ENCODE measurements at regions of chr17 and their contacts with region 1.

Region 1: GRCh38 chr17:80866147-80866793 is 125.4 kb upstream of the CHMP6 start:
- DNase-seq: peak; percentile 87
- ATAC-seq: peak; percentile 59
- H3K4me3 Mint-ChIP-seq: no peak overlapping the region
- H3K27ac Mint-ChIP-seq: peak overlapping the region; percentile 88
- H3K4me1 Mint-ChIP-seq: peaks cover 89% of the 10 kb centered on the region
- H3K27me3 Mint-ChIP-seq: no peaks in the 10 kb centered on the region

Region 2: DNA sequence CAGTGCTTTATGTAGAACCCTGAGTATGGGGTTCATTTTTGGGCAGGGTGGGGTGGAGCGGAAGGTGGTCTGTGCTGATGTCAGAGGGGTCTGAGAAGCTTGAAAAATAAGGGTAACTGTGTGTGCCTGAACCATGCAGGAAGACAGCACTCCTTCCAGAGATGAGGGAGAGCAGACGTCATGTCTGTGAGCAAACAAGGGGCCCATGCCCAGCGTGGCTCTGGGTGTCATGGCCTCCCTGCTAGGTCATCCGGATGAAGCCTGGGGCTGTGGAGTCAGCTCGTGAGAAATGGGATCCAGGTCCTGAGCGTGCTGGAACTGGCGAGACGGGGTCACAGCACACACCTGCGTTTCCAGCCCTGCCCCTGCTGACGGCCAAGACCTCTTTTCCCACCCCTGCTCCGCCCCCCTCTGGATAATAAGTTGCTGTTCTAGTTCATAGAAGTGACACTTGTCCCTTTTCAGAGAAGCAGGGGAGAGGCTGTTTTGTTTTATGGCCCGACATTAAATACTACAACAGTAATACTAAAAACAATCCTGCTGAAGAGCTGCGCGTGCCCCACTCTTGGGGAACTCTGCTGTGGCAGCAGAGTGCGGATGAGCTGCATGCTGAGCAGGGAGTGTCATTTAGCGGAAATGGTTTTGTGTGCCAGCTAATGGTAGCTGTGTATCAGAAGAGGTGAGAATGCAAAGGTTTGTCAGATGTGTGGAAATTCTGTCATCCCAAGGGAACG is 229.1 kb before region 1 on chr17:
- CTCF ChIA-PET with region 1: no interaction called
- POLR2A ChIA-PET with region 1: no interaction called
- intact Hi-C with region 1: no loop called
- DNase-seq: no peak
- ATAC-seq: no peak
- H3K4me3 Mint-ChIP-seq: no peak overlapping the region
- H3K27ac Mint-ChIP-seq: no peak overlapping the region
- H3K4me1 Mint-ChIP-seq: peaks cover 6% of the 10 kb centered on the region
- H3K27me3 Mint-ChIP-seq: no peaks in the 10 kb centered on the region

Region 3: DNA sequence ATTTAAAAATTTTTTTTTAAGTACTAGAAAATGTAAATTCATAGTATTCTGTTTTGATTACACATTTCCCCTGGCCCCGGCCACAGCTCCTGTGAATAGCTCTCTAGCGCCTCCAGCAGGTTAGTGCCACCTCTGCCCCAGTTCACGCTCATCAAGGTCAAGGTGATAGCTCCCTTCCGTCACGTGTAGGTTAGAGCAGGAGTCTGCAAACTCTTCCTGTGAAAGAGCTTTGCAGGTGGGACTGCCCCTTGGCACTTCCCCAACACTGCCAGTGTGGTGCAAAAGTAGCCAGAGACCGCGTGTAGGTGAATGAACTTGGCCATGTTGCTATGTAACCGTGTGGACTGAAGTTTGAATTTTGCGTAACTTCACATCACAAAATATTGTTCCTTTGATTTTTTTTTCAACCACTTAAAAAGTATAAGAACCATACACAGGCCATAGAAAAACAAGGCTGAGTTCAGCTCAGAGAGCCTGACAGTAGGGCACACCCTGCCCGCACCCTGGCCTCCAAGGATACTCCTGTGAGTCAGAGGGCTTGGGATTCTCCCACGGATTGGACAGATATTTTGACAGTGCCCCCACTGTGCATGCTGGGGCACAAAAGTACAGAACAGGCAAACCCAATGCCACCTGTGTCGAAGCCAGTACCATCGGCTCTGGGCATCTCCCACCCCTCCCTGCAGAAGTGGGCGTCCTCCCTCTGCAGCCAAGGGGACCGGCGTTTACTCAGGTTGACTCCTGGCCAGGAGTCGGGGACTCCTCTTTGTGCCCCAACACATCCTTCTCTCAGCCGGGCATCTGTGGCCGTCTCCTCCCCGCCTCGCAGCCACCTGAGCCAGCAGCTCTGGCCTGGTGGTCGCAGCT is 33.4 kb after region 1 on chr17:
- CTCF ChIA-PET with region 1: interaction called, 5 read pairs
- POLR2A ChIA-PET with region 1: no interaction called
- intact Hi-C with region 1: loop called in 1 of 2 experiments (anchors 1 kb)
- DNase-seq: peak; percentile 92
- ATAC-seq: peak; percentile 82
- H3K4me3 Mint-ChIP-seq: no peak overlapping the region
- H3K27ac Mint-ChIP-seq: no peak overlapping the region
- H3K4me1 Mint-ChIP-seq: peaks cover 56% of the 10 kb centered on the region
- H3K27me3 Mint-ChIP-seq: no peaks in the 10 kb centered on the region

Measured in activated CD4-positive, alpha-beta T cell treated with anti-CD3 and anti-CD28 coated beads for 36 hours (primary cell).